Breast epithelium (tissue), 4 donors: ENCODE measurements at regions of chr10 and their contacts with region 1.

Region 1: GRCh38 chr10:6516277-6516676 is 63.8 kb downstream of the PRKCQ start:
- DNase-seq: no peak
- H3K4me3 ChIP-seq: no peak overlapping the region
- H3K27ac ChIP-seq: no peak overlapping the region
- H3K4me1 ChIP-seq: no peaks in the 10 kb centered on the region
- H3K27me3 ChIP-seq: no peaks in the 10 kb centered on the region
- CTCF ChIP-seq: no peak
- POLR2A ChIP-seq: no peak

Region 2: DNA sequence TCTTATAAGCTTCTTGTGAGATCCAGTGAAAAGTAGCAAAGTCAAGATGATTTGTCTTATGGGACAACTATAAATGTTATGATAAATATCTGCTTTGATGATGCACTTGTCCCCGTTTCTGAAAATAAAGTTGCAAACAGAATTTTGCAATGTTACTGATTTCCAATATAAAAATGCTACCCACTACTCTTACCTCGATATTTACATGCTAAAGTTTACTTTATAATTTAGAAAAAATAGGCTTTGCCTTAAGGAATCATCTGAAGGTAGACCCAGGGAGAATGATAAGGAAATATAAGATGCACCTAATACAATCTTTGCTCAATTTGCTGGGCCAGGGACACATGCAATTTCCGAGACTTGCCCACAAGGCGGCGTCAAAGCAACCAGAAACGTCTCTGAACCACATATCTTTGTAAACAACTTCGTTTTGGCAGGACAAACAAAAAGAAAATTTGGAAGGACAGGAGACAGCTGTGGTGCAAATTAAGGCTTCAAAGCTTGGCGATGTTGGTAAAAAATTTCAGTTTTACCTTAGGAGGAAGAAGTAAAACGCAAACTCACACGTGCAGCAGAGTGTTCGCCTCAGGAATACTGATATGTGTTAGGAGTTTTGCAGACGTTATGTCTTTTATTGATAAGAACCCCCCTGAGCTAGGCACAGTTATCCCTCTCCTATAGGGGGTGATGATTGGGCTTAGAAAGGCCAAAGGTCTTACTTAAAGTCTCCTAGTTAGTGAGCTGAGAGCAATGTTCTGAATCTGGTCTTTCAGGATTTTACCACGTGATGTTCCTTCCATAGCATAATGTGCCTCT is 70.6 kb before region 1 on chr10:
- intact Hi-C with region 1: loop called (anchors 2 kb)
- DNase-seq: peak in 1 of 2 donors; percentile 19
- H3K4me3 ChIP-seq: no peak overlapping the region
- H3K27ac ChIP-seq: no peak overlapping the region
- H3K4me1 ChIP-seq: no peaks in the 10 kb centered on the region
- H3K27me3 ChIP-seq: no peaks in the 10 kb centered on the region
- CTCF ChIP-seq: peak in 2 of 3 donors; percentile 21 to 25
- POLR2A ChIP-seq: no peak